Dendritic cell treated with granulocyte-macrophage colony-stimulating factor and Interleukin-4, amounts not matched to agents 40 ng/mL and 50 ng/mL, for 4 days (primary cell): ENCODE measurements at regions of chr12 and their contacts with region 1.

Region 1: DNA sequence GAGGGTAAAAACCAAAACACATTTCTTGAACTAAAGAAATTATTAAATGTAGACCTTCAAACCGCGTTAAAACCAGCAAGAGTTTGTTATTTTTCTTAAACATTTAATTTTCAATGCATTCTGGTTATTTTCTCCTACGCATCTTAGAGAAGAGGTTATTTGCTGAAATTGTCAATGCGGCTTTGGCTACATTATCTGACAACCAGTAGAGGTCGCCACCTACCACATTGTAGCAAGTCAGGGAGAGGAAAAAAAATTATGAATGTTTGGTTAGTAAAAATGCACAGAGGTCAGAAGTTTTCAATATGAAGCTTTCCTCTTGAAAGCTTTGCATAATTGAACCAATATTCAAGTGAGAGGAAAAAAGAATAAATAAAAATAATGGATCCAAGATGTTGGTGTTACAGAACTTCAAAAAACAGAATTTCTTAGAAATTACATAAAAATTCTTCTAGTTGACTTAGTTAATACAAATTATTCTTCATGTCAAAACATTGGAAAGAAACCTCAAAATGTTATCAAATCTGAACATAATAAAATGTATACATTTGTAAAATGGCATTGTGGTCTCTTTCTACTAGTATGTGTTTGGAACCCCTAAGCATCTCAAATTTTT is 159.4 kb upstream of the TMTC2 start:
- H3K4me3 Mint-ChIP-seq: no peak overlapping the region
- H3K27ac Mint-ChIP-seq: no peak overlapping the region
- H3K4me1 Mint-ChIP-seq: no peaks in the 10 kb centered on the region
- H3K27me3 Mint-ChIP-seq: peaks cover 2% of the 10 kb centered on the region

Region 2: DNA sequence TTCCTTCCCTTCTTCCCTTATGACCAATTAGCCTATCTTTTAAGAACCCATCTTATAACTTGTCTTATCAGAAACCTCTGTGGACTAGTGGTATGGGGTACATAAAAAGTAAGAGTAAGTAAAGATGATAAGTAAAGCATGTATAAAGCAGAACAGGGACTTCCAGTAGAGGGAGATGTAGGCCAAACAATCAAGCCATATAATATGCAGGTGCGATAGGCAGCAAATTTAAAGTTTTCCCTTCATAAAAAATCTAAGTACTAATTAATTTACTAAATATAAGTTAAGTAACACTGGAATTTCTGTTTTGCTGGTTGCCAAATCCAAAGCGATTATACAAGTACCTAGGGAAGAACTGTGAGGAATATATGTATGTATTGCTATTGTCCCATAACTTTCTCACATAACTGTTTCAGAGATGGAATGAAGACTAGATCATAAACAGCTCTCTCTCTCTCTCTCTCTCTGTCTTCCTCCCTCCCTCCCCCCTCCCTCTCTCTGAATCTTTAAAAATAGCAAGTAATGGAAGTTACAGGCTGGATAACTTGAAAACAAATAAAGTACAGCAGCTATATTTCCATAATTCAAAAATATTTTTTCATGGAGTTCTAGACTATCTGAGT is 143.2 kb before region 1 on chr12:
- intact Hi-C with region 1: no loop called
- H3K4me3 Mint-ChIP-seq: no peak overlapping the region
- H3K27ac Mint-ChIP-seq: no peak overlapping the region
- H3K4me1 Mint-ChIP-seq: no peaks in the 10 kb centered on the region
- H3K27me3 Mint-ChIP-seq: no peaks in the 10 kb centered on the region

Region 3: GRCh38 chr12:83389237-83389996 is 862.1 kb after region 1 on chr12:
- intact Hi-C with region 1: loop called (anchors 10 kb)
- H3K4me3 Mint-ChIP-seq: no peak overlapping the region
- H3K27ac Mint-ChIP-seq: no peak overlapping the region
- H3K4me1 Mint-ChIP-seq: no peaks in the 10 kb centered on the region
- H3K27me3 Mint-ChIP-seq: no peaks in the 10 kb centered on the region

Region 4: GRCh38 chr12:83823431-83823963 is 1296.2 kb after region 1 on chr12:
- intact Hi-C with region 1: loop called (anchors 5 kb)
- H3K4me3 Mint-ChIP-seq: no peak overlapping the region
- H3K27ac Mint-ChIP-seq: no peak overlapping the region
- H3K4me1 Mint-ChIP-seq: no peaks in the 10 kb centered on the region
- H3K27me3 Mint-ChIP-seq: no peaks in the 10 kb centered on the region

Region 5: DNA sequence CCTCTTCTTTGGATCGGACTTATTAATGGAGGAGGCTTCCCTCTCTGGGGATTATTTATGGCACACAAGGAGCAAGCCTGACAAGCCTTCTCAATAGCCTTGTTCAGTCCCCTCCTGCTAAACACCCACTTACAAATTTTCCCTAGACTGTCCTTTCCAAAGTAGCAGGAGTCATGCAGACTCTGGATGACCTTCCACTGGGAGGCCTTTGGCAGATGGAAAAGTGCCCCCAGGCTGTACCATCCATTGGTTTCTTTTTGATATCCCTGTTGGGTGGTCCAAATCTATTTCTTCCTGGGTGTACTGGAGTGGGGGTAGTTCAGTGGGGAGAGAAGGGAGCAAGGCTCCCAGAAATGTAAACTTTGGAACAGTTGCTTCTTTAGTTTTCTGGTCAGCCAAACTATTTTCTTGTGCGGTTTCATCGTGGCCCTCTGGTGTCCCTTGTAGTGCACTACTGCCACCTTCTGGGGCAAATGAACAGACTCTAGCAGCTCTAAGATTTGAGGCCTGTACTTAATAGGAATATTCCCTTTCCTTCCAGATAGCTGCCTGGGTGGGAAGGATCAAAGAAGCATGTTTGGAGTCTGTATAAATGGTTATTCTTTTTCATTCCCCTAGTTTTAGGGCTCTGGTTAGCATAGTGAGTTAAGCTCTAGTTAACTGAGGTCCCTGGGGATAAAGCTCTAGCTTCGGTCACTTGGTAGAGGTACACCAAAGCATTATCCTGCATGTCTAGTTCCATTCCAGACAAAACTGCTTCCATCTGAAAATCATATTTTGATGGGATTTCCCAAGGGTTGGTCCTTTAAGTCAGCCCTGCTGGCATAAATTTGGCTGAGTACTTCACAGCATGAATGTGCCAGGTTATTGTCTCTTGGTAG is 1975.9 kb after region 1 on chr12:
- intact Hi-C with region 1: loop called (anchors 5 kb)
- H3K4me3 Mint-ChIP-seq: no peak overlapping the region
- H3K27ac Mint-ChIP-seq: no peak overlapping the region
- H3K4me1 Mint-ChIP-seq: peaks cover 6% of the 10 kb centered on the region
- H3K27me3 Mint-ChIP-seq: no peaks in the 10 kb centered on the region